Psoas muscle (tissue), 8 donors: ENCODE measurements at regions of chr18 and their contacts with region 1.

Region 1: DNA sequence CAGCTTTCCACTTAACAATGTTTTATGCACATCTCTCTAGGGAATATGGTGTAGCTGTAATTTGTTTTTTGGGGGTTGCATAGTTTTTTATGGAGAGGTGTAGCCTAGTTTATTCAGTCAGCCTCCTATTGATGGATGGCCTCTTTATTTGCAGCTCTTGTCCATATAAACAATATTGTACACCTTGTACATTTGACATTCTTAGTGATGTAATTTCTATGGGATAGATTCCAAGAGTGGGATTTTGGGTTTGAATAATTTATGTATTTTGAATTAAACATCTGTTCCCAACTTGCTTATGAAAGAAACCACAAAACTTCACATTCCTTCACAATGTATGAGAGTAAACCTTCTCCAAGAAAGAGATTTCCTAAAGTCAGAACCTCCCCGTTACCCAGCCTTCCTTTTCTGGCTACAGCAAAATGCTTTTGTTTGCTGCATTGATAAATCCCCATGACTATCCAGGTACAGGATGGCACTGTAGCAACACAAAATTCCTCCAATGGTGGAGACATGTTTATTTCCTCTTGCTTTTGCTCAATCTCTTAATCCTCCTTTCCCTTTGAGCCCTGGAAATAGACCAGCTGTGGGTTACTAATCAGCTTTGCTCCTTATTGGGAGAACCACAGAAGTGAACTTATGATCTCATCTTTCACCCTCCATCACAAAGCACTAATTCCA is 58.4 kb upstream of the GALR1 start:
- DNase-seq: no peak
- ATAC-seq: no peak
- H3K4me3 ChIP-seq: no peak overlapping the region
- H3K27ac ChIP-seq: no peak overlapping the region
- H3K4me1 ChIP-seq: no peaks in the 10 kb centered on the region
- H3K27me3 ChIP-seq: no peaks in the 10 kb centered on the region
- CTCF ChIP-seq: no peak

Region 2: DNA sequence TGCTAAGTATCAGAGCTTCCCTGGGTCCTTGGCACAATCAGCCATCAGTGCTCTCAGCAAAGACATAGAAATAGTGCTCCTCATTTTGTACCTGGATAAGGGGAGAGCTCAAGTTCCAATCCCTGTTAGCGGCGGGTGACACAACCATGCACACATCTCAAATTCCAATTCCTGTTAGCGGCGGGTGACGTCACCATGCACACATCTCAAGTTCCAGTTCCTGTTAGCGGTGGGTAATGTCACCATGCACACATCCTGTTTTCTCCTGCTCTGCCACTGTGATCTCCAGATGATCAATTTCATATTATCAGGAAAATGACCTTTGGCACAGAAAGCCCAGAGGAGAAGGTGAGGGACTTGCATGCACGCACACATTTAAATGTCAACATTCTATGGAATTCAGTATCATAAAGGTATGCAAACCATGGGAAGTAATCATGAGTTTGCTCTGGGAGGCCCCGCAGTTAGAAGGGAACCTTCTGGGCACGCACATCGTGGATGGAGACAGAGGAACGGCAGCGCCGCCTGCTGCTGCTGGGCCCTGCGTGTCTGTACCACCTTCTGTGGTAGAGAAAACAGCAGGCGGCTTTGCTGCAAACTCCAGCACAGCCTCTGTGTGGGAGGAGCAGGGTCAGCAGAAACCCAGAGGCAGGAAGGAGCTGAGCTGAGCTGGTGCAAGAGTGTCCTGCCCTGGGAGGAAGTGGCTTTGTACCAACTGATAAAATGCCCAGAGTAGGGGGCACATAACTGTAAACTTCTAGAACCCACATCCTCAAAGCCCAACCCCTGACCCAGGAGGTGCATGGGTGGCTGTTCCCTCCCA is 136.4 kb before region 1 on chr18:
- intact Hi-C with region 1: no loop called
- DNase-seq: peak; percentile 82 to 91
- ATAC-seq: peak; percentile 80 to 84 (median 82)
- H3K4me3 ChIP-seq: peak overlapping the region; percentile 27
- H3K27ac ChIP-seq: peak overlapping the region; percentile 83
- H3K4me1 ChIP-seq: peaks cover 63% of the 10 kb centered on the region
- H3K27me3 ChIP-seq: no peaks in the 10 kb centered on the region
- CTCF ChIP-seq: peak; percentile 67

Region 3: DNA sequence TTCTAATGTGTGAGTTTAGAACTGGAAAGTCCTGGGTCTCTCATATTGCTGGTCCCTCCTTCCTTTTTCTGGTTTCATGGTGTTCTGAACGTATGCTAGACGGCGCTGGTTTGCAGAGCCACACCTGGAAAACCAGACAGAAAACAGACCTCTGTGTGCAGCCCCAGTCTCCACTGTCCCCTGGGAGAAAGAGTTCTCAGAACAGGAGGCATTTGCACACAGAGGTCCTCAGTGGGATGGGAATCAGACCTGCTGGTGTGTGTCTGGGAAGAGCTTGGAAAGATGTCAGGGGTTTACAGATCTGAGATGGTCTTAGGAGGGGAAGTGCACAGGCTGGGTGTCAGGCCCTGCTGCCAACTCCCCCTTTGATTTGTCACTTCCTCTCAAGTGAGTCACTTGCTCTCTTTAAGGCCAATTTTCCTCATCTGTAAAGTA is 43.8 kb before region 1 on chr18:
- intact Hi-C with region 1: loop called in 1 of 2 experiments (anchors 5 kb)
- DNase-seq: no peak
- ATAC-seq: no peak
- H3K4me3 ChIP-seq: no peak overlapping the region
- H3K27ac ChIP-seq: no peak overlapping the region
- H3K4me1 ChIP-seq: no peaks in the 10 kb centered on the region
- H3K27me3 ChIP-seq: no peaks in the 10 kb centered on the region
- CTCF ChIP-seq: no peak

Region 4: DNA sequence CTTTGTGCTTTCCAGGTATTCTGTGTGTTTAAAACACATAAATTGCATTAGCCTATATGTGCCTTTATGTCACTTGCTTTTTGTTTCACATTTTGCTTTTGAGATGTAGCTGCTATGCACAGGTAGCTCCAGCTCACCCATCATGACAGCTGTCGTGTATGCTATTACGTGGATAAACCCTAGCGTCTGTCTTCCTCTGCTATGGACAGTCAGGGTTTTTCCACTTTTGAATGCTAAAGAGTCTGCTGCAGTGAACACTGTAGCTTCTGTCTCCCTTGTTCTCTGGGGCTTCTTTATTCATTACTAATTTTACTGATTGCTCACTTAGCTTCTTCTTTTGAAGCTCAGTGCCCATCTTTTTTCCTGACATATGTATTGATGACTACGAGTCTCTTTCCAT is 33.9 kb before region 1 on chr18:
- intact Hi-C with region 1: loop called in 1 of 2 experiments (anchors 5 kb)
- DNase-seq: no peak
- ATAC-seq: no peak
- H3K4me3 ChIP-seq: no peak overlapping the region
- H3K27ac ChIP-seq: no peak overlapping the region
- H3K4me1 ChIP-seq: no peaks in the 10 kb centered on the region
- H3K27me3 ChIP-seq: no peaks in the 10 kb centered on the region
- CTCF ChIP-seq: no peak